PC-3 (cell line): ENCODE measurements at regions of chr9 and their contacts with region 1.

Region 1: GRCh38 chr9:16335788-16336580 is 534.5 kb downstream of the BNC2 start:
- DNase-seq: peak; percentile 95
- ATAC-seq: peak; percentile 57
- H3K4me3 ChIP-seq: no peak overlapping the region
- H3K27ac ChIP-seq: peak overlapping the region; percentile 100
- H3K4me1 ChIP-seq: peaks cover 36% of the 10 kb centered on the region
- H3K27me3 ChIP-seq: no peaks in the 10 kb centered on the region
- CTCF ChIP-seq: no peak

Region 2: GRCh38 chr9:16207161-16207560 is 128.8 kb before region 1 on chr9:
- CTCF ChIA-PET with region 1: no interaction called
- POLR2A ChIA-PET with region 1: no interaction called
- intact Hi-C with region 1: no loop called
- DNase-seq: no peak
- ATAC-seq: no peak
- H3K4me3 ChIP-seq: no peak overlapping the region
- H3K27ac ChIP-seq: no peak overlapping the region
- H3K4me1 ChIP-seq: peaks cover 22% of the 10 kb centered on the region
- H3K27me3 ChIP-seq: no peaks in the 10 kb centered on the region
- CTCF ChIP-seq: no peak

Region 3: DNA sequence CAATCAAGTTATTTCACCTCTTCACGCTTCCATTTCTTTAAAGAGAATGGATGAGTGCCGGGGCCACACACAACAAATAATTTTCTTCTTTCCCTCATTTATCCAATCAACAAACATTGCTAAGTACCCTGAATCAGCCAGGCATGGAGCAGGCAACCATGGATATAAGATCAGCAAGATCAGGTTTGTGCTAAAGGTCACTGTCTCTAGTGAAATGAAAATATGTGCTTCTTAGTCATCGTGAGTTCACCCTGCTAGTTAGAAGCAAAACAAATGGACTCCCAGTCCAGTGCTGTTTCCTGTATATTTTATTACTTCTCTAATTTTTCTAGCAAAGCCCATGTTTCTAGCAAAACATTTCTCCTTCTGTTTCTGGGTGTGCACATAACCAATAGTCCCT is 94.8 kb before region 1 on chr9:
- CTCF ChIA-PET with region 1: no interaction called
- POLR2A ChIA-PET with region 1: interaction called, 3 read pairs
- intact Hi-C with region 1: loop called (anchors 1 kb)
- DNase-seq: peak; percentile 70
- ATAC-seq: peak; percentile 95
- H3K4me3 ChIP-seq: no peak overlapping the region
- H3K27ac ChIP-seq: peak overlapping the region; percentile 66
- H3K4me1 ChIP-seq: peaks cover 40% of the 10 kb centered on the region
- H3K27me3 ChIP-seq: no peaks in the 10 kb centered on the region
- CTCF ChIP-seq: no peak

Region 4: DNA sequence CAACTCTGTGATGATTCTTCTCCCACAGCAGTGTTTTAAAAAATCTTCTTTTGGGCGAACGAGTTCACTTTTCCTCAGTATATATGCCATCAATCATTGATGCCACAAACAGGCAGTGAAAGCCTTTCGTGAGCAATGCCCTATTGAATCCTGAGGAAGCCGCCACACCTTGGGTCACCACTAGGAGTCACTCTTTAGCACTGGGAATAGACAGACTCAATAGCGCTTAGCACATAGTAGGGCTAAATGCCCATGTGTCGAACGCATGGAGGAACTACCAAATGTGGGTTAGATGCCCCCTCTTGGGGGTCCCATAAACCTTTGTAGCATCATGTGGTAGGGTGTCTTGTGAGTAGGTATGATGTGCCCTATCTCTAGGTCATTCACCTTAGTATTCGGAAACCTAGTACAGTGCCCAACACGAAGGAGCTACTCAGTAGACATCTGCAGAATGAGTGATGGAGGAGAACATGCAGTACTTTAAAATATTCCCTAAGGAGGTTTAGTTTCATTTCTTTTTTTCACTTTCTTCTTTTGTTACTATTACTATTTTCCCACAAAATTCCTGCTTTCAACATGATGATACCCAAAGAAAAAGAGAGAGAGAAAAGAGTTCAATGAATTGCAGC is 69.2 kb before region 1 on chr9:
- CTCF ChIA-PET with region 1: no interaction called
- POLR2A ChIA-PET with region 1: no interaction called
- intact Hi-C with region 1: loop called (anchors 2 kb)
- DNase-seq: peak; percentile 22
- ATAC-seq: no peak
- H3K4me3 ChIP-seq: peak overlapping the region; percentile 56; the same call in 1 of the 2 replicates
- H3K27ac ChIP-seq: peak overlapping the region; percentile 70
- H3K4me1 ChIP-seq: peaks cover 32% of the 10 kb centered on the region
- H3K27me3 ChIP-seq: no peaks in the 10 kb centered on the region
- CTCF ChIP-seq: peak; percentile 81

Region 5: GRCh38 chr9:16276866-16277265 is 59.1 kb before region 1 on chr9:
- CTCF ChIA-PET with region 1: no interaction called
- POLR2A ChIA-PET with region 1: interaction called, 16 read pairs
- intact Hi-C with region 1: no loop called
- DNase-seq: no peak
- ATAC-seq: no peak
- H3K4me3 ChIP-seq: no peak overlapping the region
- H3K27ac ChIP-seq: no peak overlapping the region
- H3K4me1 ChIP-seq: peaks cover 6% of the 10 kb centered on the region
- H3K27me3 ChIP-seq: no peaks in the 10 kb centered on the region
- CTCF ChIP-seq: no peak